ENCODE measurements at regions of chr13 and their contacts with region 1.

Region 1: GRCh38 chr13:33542283-33543088 is 256.9 kb upstream of the STARD13 start:
- DNase-seq: peak; percentile 99
- H3K4me3 Mint-ChIP-seq: peak overlapping the region; percentile 90
- H3K27ac Mint-ChIP-seq: peak overlapping the region; percentile 100
- H3K4me1 Mint-ChIP-seq: peaks cover 53% of the 10 kb centered on the region
- H3K27me3 Mint-ChIP-seq: no peaks in the 10 kb centered on the region

Region 2: GRCh38 chr13:32427852-32428580 is 1114.5 kb before region 1 on chr13 and contains the start of gene N4BP2L1:
- intact Hi-C with region 1: loop called (anchors 1 kb)
- DNase-seq: peak; percentile 74
- H3K4me3 Mint-ChIP-seq: peak within 1 kb of the TSS; percentile 97
- H3K27ac Mint-ChIP-seq: peak within 1 kb of the TSS; percentile 98
- H3K4me1 Mint-ChIP-seq: peaks cover 53% of the 10 kb centered on the region
- H3K27me3 Mint-ChIP-seq: no peaks in the 10 kb centered on the region
- total RNA-seq, gene N4BP2L1: 17.7 and 20.0 TPM in 2 replicates

Region 3: DNA sequence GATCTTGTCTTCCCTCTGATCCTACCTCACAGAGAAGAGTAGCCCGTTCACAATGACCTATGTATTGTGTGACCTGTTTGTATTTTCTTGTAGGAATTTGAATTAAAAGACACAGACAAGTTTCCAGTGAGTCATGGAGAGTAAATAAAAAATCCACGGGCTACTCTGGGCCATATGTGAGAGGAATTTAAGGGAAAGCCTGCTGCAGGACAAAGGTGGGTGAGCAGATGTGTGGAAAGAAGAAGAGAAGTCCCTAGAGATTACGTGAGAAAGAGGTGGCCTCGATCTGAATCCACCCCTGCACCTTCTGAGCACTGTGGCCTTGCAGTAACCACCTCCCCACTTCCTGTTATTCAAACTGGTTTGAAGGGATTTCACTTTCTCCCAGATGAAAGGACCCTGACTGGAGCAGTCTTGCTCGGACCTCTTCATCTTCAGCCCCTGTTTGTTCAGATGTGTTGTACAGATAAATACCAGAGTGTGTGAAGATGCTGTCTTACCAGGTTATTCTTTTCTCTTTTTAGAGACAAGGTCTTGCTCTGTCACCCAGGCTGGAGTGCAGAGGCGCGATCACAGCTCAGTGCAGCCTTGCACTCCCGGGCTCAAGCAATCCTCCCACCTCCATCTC is 750.8 kb before region 1 on chr13:
- intact Hi-C with region 1: no loop called
- DNase-seq: peak; percentile 33
- H3K4me3 Mint-ChIP-seq: peak overlapping the region; percentile 50
- H3K27ac Mint-ChIP-seq: peak overlapping the region; percentile 46
- H3K4me1 Mint-ChIP-seq: peaks cover 33% of the 10 kb centered on the region
- H3K27me3 Mint-ChIP-seq: no peaks in the 10 kb centered on the region

Region 4: DNA sequence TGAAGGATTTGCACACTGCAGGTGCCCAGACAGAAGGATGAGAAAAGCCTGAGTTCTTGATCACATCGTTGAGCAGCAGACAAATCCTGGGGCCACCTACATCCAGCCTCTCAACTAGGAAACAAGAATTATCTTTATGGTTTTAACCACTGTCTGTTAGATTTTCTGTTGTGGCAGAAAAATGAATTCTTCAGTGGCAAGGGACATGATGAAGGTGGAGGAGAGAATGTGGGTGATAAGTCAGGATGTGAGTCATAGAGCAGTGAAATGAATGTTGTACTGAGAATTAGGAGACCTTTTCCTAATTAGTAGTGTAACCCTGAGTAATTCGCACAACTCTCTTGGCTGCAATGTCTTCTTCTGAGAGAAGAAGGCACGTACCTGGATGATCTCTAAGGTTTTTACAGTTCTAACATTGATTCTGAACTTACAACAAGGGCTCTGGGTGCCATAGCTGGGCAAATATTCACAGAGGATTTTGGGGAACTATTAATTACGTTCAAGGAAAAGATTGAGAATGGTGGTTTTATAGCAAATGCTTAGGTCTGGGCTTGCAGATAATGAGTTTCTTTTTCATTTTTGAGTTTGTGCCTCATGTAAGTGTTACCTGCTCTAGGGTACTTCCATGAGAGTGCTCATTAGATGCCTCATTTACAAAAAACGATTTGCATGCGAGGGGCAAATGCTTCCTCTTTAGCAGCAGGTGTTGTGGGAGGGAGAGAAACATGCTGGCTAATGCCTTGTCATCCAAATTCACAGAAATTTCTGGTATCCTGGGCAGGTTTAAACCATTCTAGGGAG is 637.2 kb before region 1 on chr13:
- intact Hi-C with region 1: loop called (anchors 1 kb)
- DNase-seq: no peak
- H3K4me3 Mint-ChIP-seq: peak overlapping the region; percentile 69
- H3K27ac Mint-ChIP-seq: peak overlapping the region; percentile 83
- H3K4me1 Mint-ChIP-seq: peaks cover 32% of the 10 kb centered on the region
- H3K27me3 Mint-ChIP-seq: peaks cover 4% of the 10 kb centered on the region

Region 5: DNA sequence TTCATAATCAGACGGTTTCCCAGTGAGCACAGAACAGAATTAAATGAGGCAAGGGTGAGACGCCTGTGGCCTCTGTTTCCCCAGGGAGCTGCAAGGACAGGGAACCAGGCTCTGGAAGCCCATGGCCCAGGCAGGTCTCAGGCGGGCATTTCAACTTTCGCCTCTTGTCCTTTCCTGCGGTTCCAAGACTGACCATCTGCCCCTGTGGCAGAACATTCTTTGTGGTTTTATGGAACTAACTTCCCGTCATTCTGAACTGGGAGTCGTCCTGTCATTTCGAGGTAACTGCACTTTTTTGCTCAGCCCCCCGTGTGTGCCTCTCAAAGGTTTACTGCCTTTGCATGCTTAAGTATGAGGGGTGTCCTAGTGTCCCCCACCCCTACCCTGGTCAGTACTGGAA is 455.4 kb before region 1 on chr13:
- intact Hi-C with region 1: loop called (anchors 5 kb)
- DNase-seq: no peak
- H3K4me3 Mint-ChIP-seq: no peak overlapping the region
- H3K27ac Mint-ChIP-seq: peak overlapping the region; percentile 69
- H3K4me1 Mint-ChIP-seq: peaks cover 20% of the 10 kb centered on the region
- H3K27me3 Mint-ChIP-seq: peaks cover 2% of the 10 kb centered on the region

Region 6: GRCh38 chr13:33610471-33611015 is 68.1 kb after region 1 on chr13:
- intact Hi-C with region 1: loop called (anchors 1 kb)
- DNase-seq: peak; percentile 8
- H3K4me3 Mint-ChIP-seq: peak overlapping the region; percentile 82
- H3K27ac Mint-ChIP-seq: peak overlapping the region; percentile 95
- H3K4me1 Mint-ChIP-seq: peaks cover 46% of the 10 kb centered on the region
- H3K27me3 Mint-ChIP-seq: no peaks in the 10 kb centered on the region

Region 7: GRCh38 chr13:34156841-34157365 is 614.4 kb after region 1 on chr13:
- intact Hi-C with region 1: loop called (anchors 2 kb)
- DNase-seq: peak; percentile 59
- H3K4me3 Mint-ChIP-seq: peak overlapping the region; percentile 68
- H3K27ac Mint-ChIP-seq: peak overlapping the region; percentile 91
- H3K4me1 Mint-ChIP-seq: peaks cover 37% of the 10 kb centered on the region
- H3K27me3 Mint-ChIP-seq: peaks cover 3% of the 10 kb centered on the region

Measured in activated T-helper 1 cell treated with anti-CD3 and anti-CD28 coated beads, Interleukin-12 subunit alpha, Interleukin-12 subunit beta, Interleukin-2, Interleukin-4 antibody, amounts not matched to agents 30 ng/mL and 10 ng/mL and 1 ng/mL, durations not matched to agents 14 hours and 24 hours and 36 hours (primary cell).